CD8-positive, alpha-beta T cell (primary cell): ENCODE measurements at regions of chr3 and their contacts with region 1.

Region 1: GRCh38 chr3:126752303-126752842 is 48.3 kb downstream of the CHCHD6 start:
- DNase-seq: peak in 8 of 9 experiments; percentile 26 to 60 (median 38)
- ATAC-seq: no peak
- H3K4me3 ChIP-seq: no peak overlapping the region
- H3K4me3 Mint-ChIP-seq: no peak overlapping the region
- H3K27ac ChIP-seq: no peak overlapping the region
- H3K27ac Mint-ChIP-seq: no peak overlapping the region
- H3K4me1 ChIP-seq: no peaks in the 10 kb centered on the region
- H3K4me1 Mint-ChIP-seq: peaks cover 8% of the 10 kb centered on the region
- H3K27me3 ChIP-seq: no peaks in the 10 kb centered on the region
- H3K27me3 Mint-ChIP-seq: no peaks in the 10 kb centered on the region
- CTCF ChIP-seq: no peak

Region 2: DNA sequence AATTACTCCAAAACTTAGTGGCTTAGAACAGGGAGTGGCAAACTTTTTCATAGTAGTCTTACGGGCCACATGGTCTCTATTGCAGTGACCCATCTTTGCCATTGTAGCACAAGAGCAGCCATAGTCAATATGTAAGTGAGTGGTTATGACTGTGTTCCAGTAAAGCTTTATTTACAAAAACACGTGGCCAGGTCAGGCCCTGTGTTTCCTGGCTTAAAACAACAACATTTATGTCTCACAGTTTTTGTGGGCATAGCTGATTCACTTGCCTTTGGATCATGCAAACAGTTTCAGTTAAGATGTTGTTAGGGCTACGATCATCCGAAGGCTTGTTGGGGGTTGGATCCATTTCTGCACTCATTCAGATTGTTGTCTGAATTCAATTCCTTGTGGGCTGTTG is 55.4 kb after region 1 on chr3:
- CTCF ChIA-PET with region 1: no interaction called
- POLR2A ChIA-PET with region 1: no interaction called
- intact Hi-C with region 1: no loop called
- DNase-seq: no peak
- ATAC-seq: no peak
- H3K4me3 ChIP-seq: no peak overlapping the region
- H3K4me3 Mint-ChIP-seq: no peak overlapping the region
- H3K27ac ChIP-seq: no peak overlapping the region
- H3K27ac Mint-ChIP-seq: no peak overlapping the region
- H3K4me1 ChIP-seq: no peaks in the 10 kb centered on the region
- H3K4me1 Mint-ChIP-seq: no peaks in the 10 kb centered on the region
- H3K27me3 ChIP-seq: no peaks in the 10 kb centered on the region
- H3K27me3 Mint-ChIP-seq: no peaks in the 10 kb centered on the region
- CTCF ChIP-seq: no peak

Region 3: GRCh38 chr3:127467391-127467790 is 715.0 kb after region 1 on chr3:
- CTCF ChIA-PET with region 1: no interaction called
- POLR2A ChIA-PET with region 1: no interaction called
- intact Hi-C with region 1: loop called in 1 of 2 experiments (anchors 10 kb)
- DNase-seq: no peak
- ATAC-seq: no peak
- H3K4me3 ChIP-seq: no peak overlapping the region
- H3K4me3 Mint-ChIP-seq: no peak overlapping the region
- H3K27ac ChIP-seq: no peak overlapping the region
- H3K27ac Mint-ChIP-seq: no peak overlapping the region
- H3K4me1 ChIP-seq: no peaks in the 10 kb centered on the region
- H3K4me1 Mint-ChIP-seq: no peaks in the 10 kb centered on the region
- H3K27me3 ChIP-seq: no peaks in the 10 kb centered on the region
- H3K27me3 Mint-ChIP-seq: peaks cover 11% of the 10 kb centered on the region
- CTCF ChIP-seq: no peak